ENCODE measurements at regions of chr7 and their contacts with region 1.

Region 1: GRCh38 chr7:44565097-44565794 is 8.5 kb downstream of the DDX56 start:
- DNase-seq: peak; percentile 63
- ATAC-seq: peak; percentile 98
- H3K4me3 Mint-ChIP-seq: no peak overlapping the region
- H3K27ac Mint-ChIP-seq: peak overlapping the region; percentile 50
- H3K4me1 Mint-ChIP-seq: no peaks in the 10 kb centered on the region
- H3K27me3 Mint-ChIP-seq: no peaks in the 10 kb centered on the region
- CTCF ChIP-seq: peak; percentile 55

Region 2: GRCh38 chr7:44240983-44241510 is 324.2 kb before region 1 on chr7:
- CTCF ChIA-PET with region 1: interaction called, 23 read pairs
- POLR2A ChIA-PET with region 1: no interaction called
- intact Hi-C with region 1: loop called (anchors 1 kb)
- DNase-seq: peak; percentile 41
- ATAC-seq: peak; percentile 87
- H3K4me3 Mint-ChIP-seq: peak overlapping the region; percentile 56
- H3K27ac Mint-ChIP-seq: no peak overlapping the region
- H3K4me1 Mint-ChIP-seq: no peaks in the 10 kb centered on the region
- H3K27me3 Mint-ChIP-seq: no peaks in the 10 kb centered on the region
- CTCF ChIP-seq: no peak

Region 3: GRCh38 chr7:44431091-44431608 is 134.1 kb before region 1 on chr7:
- CTCF ChIA-PET with region 1: interaction called, 9 read pairs
- POLR2A ChIA-PET with region 1: no interaction called
- intact Hi-C with region 1: loop called (anchors 1 kb)
- DNase-seq: no peak
- ATAC-seq: peak; percentile 45
- H3K4me3 Mint-ChIP-seq: no peak overlapping the region
- H3K27ac Mint-ChIP-seq: no peak overlapping the region
- H3K4me1 Mint-ChIP-seq: peaks cover 42% of the 10 kb centered on the region
- H3K27me3 Mint-ChIP-seq: no peaks in the 10 kb centered on the region
- CTCF ChIP-seq: no peak

Region 4: DNA sequence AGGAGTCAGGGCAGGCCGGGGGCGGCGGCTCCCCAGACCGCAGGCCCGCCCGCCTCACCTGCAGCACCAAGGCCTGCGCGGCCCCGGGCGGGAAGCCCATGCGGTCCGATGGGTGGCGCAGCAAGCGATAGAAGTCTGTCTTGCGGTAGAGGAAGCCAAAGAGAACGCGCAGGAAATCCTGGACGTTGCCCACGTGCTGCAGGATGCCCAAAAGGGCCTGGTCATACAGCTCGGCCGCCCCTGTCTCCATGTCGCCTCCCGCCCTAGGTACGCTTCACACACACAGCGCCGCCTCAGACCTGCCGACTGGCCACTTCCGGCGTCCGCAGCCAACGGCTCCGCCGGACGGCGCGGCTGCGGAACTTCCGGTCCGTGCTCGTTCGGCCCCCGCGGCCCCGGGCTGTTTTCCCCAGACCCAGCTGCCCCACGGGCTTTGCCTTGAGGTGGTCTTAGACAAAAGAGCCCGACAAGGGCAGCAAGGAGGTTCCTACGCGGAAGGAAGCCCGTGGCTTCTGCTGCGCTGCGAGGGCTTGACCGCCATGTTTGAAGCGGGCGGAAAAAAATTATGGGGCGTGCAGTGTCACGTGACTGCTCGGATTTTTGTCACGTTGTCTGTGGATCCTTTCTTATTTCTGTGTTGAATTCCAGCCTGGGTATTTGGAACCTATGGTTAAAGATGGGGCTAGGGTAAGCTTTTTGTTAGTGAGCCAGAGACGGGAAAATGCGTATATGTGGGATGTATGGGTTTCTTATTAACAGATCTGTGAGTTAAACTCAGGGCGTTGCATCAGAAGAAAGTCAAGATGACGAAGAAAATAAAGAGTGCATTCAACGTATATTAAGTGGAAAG is 74.7 kb before region 1 on chr7 and contains the start of gene NUDCD3:
- CTCF ChIA-PET with region 1: interaction called, 5 read pairs
- POLR2A ChIA-PET with region 1: interaction called, 3 read pairs
- intact Hi-C with region 1: loop called (anchors 2 kb)
- DNase-seq: peak; percentile 80
- ATAC-seq: peak; percentile 84
- H3K4me3 Mint-ChIP-seq: peak within 1 kb of the TSS; percentile 90
- H3K27ac Mint-ChIP-seq: peak within 1 kb of the TSS; percentile 97
- H3K4me1 Mint-ChIP-seq: peaks cover 46% of the 10 kb centered on the region
- H3K27me3 Mint-ChIP-seq: peaks cover 5% of the 10 kb centered on the region
- CTCF ChIP-seq: no peak
- total RNA-seq, gene NUDCD3: 80.7 and 85.1 TPM in 2 replicates

Measured in activated B cell treated with CpG ODN at 0.5 μM for 24 hours (primary cell).